ENCODE measurements at regions of chr17 and their contacts with region 1.

Region 1: GRCh38 chr17:68497885-68498319 is 14.3 kb upstream of the PRKAR1A start:
- DNase-seq: no peak
- ATAC-seq: no peak
- H3K4me3 ChIP-seq: no peak overlapping the region
- H3K27ac ChIP-seq: no peak overlapping the region
- H3K4me1 ChIP-seq: no peaks in the 10 kb centered on the region
- H3K27me3 ChIP-seq: no peaks in the 10 kb centered on the region
- CTCF ChIP-seq: no peak

Region 2: DNA sequence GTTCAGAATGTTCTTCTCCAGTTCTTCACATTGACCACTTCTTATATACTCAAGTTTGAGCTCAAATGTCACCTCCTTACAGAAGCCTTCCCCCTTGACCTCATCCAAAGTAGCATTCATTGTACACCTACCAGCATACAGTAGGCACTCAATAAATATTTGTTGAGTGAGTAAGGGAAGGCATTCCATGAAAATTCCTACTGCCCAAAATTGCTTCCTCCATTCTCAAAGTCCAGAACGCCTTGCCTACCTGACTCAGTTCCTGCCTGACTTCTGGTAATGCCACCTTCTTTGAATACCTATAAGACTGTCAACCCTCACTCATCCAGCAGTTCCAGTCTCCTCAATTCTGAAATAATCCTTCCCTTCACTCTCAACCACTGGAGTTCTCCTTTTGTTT is 687.4 kb before region 1 on chr17:
- CTCF ChIA-PET with region 1: no interaction called
- POLR2A ChIA-PET with region 1: no interaction called
- intact Hi-C with region 1: no loop called
- DNase-seq: peak; percentile 80
- ATAC-seq: peak; percentile 30
- H3K4me3 ChIP-seq: no peak overlapping the region
- H3K27ac ChIP-seq: no peak overlapping the region
- H3K4me1 ChIP-seq: peaks cover 25% of the 10 kb centered on the region
- H3K27me3 ChIP-seq: no peaks in the 10 kb centered on the region
- CTCF ChIP-seq: no peak

Region 3: DNA sequence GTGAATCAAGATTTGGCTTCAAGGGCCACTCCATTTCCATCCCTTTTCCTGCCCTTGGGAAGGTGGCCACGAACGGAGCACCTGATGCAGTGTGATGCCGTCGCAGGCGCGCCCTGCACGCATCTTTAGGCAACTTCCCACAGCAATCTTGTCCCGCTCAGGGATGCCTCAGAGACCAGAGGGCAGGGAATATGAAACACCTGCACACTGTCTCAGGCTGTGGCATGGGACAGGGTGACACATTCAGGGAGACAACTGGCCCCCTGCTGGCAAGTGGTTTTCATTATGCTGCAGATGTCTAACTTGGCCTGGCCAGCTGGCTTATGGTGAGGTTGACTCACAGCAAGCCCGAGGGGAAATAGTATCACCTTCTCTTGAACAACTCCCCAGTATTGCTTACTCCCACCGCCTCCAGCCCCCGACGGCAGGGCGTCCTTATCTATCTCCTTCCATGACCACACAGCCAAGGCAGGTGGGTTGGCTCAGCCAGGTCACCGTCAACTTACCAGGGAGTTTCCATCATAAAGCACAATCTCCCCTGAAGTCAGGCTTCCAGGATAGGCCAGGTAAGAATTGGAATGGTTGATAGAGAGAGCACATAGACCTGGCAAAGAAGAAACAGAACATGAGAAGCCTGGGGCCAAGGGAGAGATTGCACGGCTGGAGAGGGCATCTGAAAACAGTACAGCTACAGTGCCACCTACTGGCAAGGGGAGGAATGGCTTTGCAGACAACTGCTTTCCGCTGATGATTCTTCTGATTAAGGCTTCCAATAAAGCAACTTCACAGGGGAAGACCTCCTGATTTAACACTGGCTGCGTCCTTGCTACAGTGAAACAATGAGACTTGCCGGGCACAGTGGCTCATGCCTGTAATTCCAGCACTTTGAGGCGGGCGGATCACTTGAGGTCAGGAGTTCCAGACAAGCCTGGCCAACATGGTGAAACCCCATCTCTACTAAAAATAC is 61.7 kb before region 1 on chr17:
- CTCF ChIA-PET with region 1: no interaction called
- POLR2A ChIA-PET with region 1: no interaction called
- intact Hi-C with region 1: no loop called
- DNase-seq: peak; percentile 89
- ATAC-seq: peak; percentile 85
- H3K4me3 ChIP-seq: peak overlapping the region; percentile 48; the same call in 1 of the 2 replicates
- H3K27ac ChIP-seq: peak overlapping the region; percentile 81
- H3K4me1 ChIP-seq: peaks cover 10% of the 10 kb centered on the region
- H3K27me3 ChIP-seq: no peaks in the 10 kb centered on the region
- CTCF ChIP-seq: peak; percentile 86

Region 4: GRCh38 chr17:68512247-68512982 is 14.5 kb after region 1 on chr17 and contains the start of gene PRKAR1A:
- CTCF ChIA-PET with region 1: no interaction called
- POLR2A ChIA-PET with region 1: interaction called, 27 read pairs
- intact Hi-C with region 1: no loop called
- DNase-seq: peak; percentile 97
- ATAC-seq: peak; percentile 78
- H3K4me3 ChIP-seq: peak within 1 kb of the TSS; percentile 86
- H3K27ac ChIP-seq: peak within 1 kb of the TSS; percentile 84
- H3K4me1 ChIP-seq: peaks cover 49% of the 10 kb centered on the region
- H3K27me3 ChIP-seq: no peaks in the 10 kb centered on the region
- CTCF ChIP-seq: no peak
- total RNA-seq, gene PRKAR1A: 208 and 214 TPM in 2 replicates

Measured in PC-3 (cell line).